HepG2 (cell line): ENCODE measurements at regions of chr17 and their contacts with region 1.

Region 1: GRCh38 chr17:61454381-61455323 is 2.4 kb downstream of the TBX4 start:
- DNase-seq: peak; percentile 88
- ATAC-seq: peak; percentile 85
- H3K4me3 ChIP-seq: no peak overlapping the region; a peak in 1 of 6 replicates
- H3K27ac ChIP-seq: peak overlapping the region; percentile 15
- H3K4me1 ChIP-seq: peaks cover 37% of the 10 kb centered on the region
- H3K27me3 ChIP-seq: no peaks in the 10 kb centered on the region
- CTCF ChIP-seq: no peak
- EP300 ChIP-seq: peak in 1 of 2 experiments; percentile 88; a peak in 2 of 4 replicates
- POLR2A ChIP-seq: no peak
- RAD21 ChIP-seq: peak; percentile 31; the same call in 1 of the 2 replicates

Region 2: DNA sequence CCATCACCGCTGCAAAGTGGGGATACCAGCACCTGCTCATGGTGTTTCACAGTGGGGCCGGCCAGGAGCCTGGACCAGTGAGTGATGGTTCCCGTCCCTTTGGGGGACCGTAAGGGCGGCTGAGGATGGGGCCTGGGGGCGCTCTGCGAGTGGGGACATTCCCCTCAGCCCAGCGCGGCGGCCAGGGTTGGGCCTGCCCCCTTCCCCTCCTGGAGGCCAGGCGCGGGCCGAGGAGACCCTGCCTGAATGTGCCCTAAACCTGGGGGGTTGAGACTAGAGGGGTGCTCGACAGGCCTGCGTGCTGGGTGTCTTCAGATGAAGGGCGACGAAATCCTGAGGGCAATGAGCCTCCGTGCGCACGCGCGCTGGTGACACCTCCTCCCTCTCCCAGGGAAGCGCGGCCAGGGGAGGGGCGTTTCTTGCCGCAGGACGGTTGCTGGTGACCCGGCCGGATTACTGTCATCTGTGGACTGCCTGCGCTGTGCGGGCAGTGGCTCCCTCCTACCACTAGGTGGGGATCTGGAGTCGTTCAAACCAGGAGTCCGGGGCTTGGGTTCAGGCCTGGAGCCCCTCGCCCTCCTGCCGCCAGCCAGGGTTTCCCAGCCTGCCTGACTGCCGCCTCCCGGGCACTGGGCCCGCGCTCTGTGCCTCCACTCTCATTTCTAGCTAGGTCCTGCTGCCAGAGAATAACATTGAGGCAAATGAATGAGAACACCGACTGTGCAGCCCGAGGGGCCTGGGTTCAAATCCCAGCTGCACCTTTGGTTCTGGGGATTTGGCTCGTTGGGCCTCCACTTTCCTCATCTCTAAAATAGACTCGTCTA is 37.9 kb before region 1 on chr17:
- CTCF ChIA-PET with region 1: no interaction called
- POLR2A ChIA-PET with region 1: no interaction called
- in situ Hi-C with region 1: no loop called
- intact Hi-C with region 1: no loop called
- DNase-seq: peak; percentile 91
- ATAC-seq: peak; percentile 64
- H3K4me3 ChIP-seq: peak overlapping the region in 1 of 3 experiments; percentile 59; a peak in 1 of 6 replicates
- H3K27ac ChIP-seq: no peak overlapping the region
- H3K4me1 ChIP-seq: peaks cover 60% of the 10 kb centered on the region
- H3K27me3 ChIP-seq: no peaks in the 10 kb centered on the region
- CTCF ChIP-seq: peak; percentile 99
- EP300 ChIP-seq: no peak
- POLR2A ChIP-seq: no peak
- RAD21 ChIP-seq: peak; percentile 99

Region 3: DNA sequence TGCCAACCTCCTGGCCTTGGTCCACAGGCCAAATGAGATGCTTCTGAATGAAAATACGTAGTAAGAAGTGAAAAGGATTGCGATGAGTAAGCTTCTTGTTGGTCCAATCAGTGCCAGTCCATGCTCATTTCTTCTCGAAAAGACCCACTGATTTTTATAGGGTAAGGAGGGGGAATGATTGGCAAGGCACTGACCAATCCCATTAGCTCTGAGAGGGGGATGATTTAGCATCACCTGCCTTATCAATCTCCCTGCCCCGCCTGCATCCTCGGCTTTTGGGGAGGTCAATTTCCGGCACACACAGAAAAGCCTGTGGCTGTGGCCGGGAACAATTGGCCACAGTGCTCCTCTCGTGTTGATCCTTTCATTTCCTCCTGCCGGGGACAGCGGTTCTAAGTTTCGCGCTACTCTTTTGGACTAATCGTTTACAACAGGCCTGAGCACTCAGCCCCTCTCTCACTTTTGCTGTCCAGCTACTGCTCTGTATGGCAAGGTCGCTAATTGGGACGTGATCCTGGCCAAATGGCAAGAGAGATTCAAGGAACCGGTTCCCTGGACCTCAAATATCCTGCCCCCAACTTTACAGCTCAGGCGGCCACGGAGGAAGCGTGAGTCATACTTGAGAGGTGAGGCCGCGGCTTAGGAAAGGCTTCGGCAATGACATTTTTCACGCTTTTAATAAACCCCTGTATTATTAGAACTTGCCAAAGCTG is 40.6 kb after region 1 on chr17:
- CTCF ChIA-PET with region 1: no interaction called
- POLR2A ChIA-PET with region 1: no interaction called
- in situ Hi-C with region 1: no loop called
- intact Hi-C with region 1: loop called (anchors 5 kb)
- DNase-seq: no peak
- ATAC-seq: no peak
- H3K4me3 ChIP-seq: no peak overlapping the region
- H3K27ac ChIP-seq: no peak overlapping the region
- H3K4me1 ChIP-seq: peaks cover 76% of the 10 kb centered on the region
- H3K27me3 ChIP-seq: no peaks in the 10 kb centered on the region
- CTCF ChIP-seq: no peak
- EP300 ChIP-seq: no peak
- POLR2A ChIP-seq: no peak
- RAD21 ChIP-seq: no peak